ENCODE measurements at regions of chr17 and their contacts with region 1.

Region 1: GRCh38 chr17:33113276-33113990 is 121.8 kb downstream of the SPACA3 start:
- DNase-seq: peak in 1 of 10 donors; percentile 16
- H3K4me3 ChIP-seq: no peak overlapping the region
- H3K27ac ChIP-seq: no peak overlapping the region
- H3K27me3 ChIP-seq: peaks cover 0 to 6% (median 0%) of the 10 kb centered on the region in 45 donors
- CTCF ChIP-seq: no peak

Region 2: DNA sequence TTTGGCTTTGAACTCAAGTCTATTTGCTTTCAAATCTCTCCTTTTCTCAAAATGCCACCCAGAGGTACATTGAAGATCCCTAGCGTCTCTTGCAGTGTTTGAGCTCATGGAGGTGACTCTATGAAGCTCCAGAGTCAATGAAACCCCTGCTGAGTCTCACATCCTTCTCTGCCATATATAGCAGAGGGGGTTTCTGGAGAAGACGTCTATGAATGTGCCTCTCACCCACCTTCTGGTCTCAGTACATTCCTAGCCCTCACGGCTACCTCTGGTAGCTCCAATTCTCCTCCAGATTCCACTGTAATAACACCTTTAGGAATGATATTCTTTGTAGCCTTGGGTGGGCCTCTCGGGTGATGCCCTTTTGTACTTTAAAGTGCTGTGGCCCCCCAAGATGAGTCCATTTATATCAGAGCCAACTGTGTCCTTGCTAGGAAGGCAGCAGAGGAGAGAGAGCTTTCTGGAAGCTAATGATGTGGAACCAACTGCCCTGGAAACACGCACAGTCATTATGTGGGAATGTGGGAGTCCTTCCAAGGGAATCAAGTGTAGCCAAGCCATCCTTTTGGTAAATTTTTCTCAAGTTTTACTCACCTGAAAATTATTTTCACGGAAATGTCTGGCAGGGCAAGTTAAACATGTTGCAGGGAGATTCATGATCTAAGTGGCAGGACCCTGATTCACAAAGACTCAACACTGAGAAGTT is 56.3 kb after region 1 on chr17:
- intact Hi-C with region 1: loop called in 1 of 2 experiments (anchors 10 kb)
- DNase-seq: no peak
- H3K4me3 ChIP-seq: no peak overlapping the region
- H3K27ac ChIP-seq: no peak overlapping the region
- H3K27me3 ChIP-seq: peaks cover 0 to 13% (median 0%) of the 10 kb centered on the region in 45 donors
- CTCF ChIP-seq: no peak

Measured in dorsolateral prefrontal cortex (tissue), 120 donors.